Gastrocnemius medialis (tissue), 4 donors: ENCODE measurements at regions of chr4 and their contacts with region 1.

Region 1: DNA sequence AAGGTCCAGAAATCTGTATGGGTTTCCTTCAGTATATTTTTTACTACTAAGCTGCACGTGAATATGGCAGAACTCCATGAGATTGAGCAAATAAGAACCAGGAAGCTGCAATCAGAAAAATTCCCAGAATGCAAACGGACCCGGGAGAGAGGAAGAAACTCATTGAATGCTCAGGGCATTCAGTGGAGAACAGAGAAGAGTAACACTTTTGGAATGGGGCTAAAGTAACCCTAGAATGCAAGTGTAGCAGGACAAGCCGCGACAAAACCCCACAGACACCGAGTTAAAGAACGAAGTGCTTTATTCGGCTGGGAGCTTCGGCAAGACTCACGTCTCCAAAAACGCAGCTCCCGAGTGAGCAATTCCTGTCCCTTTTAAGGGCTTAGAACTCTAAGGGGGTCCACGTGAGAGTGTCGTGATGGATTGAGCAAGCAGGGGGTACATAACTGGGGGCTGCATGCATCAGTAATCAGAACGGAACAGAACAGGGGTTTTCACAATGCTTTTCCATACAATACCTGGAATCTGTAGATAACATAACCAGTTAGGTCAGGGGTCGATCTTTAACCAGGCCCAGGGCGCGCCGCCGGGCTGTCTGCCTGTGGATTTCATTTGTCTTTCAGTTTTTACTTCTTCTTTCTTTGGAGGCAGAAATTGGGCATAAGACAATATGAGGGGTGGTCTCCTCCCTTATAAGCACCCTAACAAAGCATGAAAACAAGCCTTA is 56.4 kb downstream of the RAB28 start:
- DNase-seq: no peak
- ATAC-seq: no peak
- H3K4me3 ChIP-seq: no peak overlapping the region
- H3K27ac ChIP-seq: no peak overlapping the region
- H3K4me1 ChIP-seq: peaks cover 4 to 10% of the 10 kb centered on the region in 2 donors
- H3K27me3 ChIP-seq: no peaks in the 10 kb centered on the region
- CTCF ChIP-seq: no peak
- POLR2A ChIP-seq: no peak

Region 2: DNA sequence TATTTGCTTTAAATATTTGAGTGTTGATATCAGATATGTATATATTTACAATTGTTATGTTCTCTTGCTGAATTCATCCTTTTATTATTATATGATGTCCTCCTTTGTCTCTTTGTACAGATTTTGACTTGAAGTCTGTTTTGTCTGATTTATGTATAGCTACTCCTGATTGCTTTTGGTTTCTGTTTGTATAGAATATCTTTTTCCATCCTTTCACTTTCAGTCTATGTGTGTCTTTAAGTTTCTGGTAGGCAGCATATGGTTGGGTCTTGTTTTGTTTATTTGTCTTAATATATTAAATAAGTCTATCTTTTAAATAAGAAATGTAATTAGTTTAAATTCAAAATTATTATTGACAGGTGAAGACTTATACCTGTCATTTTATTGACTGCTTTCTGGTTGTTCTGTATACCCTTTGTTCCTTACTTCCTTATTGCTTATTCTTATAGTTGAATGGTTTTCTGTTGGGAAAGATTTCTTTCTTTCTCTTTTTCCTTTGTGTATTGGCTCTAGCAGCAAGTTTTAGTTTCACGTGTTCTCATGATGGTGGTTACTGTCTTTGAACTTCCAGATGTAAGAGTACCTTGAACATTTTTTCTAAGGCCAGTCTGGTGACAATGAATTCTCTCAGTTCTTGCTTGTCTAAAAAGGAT is 25.3 kb after region 1 on chr4:
- in situ Hi-C with region 1: no loop called
- intact Hi-C with region 1: loop called (anchors 2 kb)
- DNase-seq: no peak
- ATAC-seq: no peak
- H3K4me3 ChIP-seq: no peak overlapping the region
- H3K27ac ChIP-seq: no peak overlapping the region
- H3K4me1 ChIP-seq: peaks cover 0 to 3% of the 10 kb centered on the region in 2 donors
- H3K27me3 ChIP-seq: no peaks in the 10 kb centered on the region
- CTCF ChIP-seq: no peak
- POLR2A ChIP-seq: no peak

Region 3: DNA sequence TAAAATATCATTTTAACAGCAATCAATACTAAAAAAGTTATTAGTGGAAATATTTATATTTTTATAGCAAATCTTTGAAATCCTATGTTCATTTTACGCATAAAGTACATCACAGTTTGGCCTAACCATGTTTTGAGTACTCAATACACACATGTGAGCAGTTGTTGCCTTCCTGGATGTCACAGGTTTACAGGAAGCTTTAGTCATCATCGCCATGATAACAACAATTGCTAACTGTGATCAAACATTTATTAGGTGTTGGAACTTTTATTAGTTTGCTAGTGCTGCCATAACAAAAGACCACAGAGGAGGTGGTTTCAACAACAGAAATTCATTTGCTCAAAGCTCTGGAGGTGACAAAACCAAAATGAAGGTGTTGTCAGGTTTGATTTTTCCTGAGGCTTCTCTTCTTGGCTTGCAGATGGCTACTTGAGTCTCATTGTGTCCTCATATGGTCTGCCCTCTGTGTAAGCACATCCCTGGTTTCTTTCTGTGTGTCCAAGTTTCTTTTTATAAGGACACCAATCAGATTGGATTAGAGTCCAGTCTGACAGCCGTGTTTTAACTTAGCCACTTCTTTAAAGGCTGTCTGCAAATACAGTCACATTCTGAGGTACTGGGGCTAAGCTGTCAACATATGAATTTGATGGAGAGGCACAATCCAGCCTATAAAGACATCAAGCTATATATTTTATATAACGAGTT is 242.8 kb after region 1 on chr4:
- in situ Hi-C with region 1: no loop called
- intact Hi-C with region 1: no loop called
- DNase-seq: no peak
- ATAC-seq: no peak
- H3K4me3 ChIP-seq: no peak overlapping the region
- H3K27ac ChIP-seq: no peak overlapping the region
- H3K4me1 ChIP-seq: no peaks in the 10 kb centered on the region
- H3K27me3 ChIP-seq: no peaks in the 10 kb centered on the region
- CTCF ChIP-seq: no peak
- POLR2A ChIP-seq: no peak